Gastrocnemius medialis (tissue), 4 donors: ENCODE measurements at regions of chr12 and their contacts with region 1.

Region 1: GRCh38 chr12:1650260-1650977 is 21.4 kb downstream of the WNT5B start:
- DNase-seq: no peak
- ATAC-seq: no peak
- H3K4me3 ChIP-seq: no peak overlapping the region
- H3K27ac ChIP-seq: no peak overlapping the region
- H3K4me1 ChIP-seq: no peaks in the 10 kb centered on the region
- H3K27me3 ChIP-seq: no peaks in the 10 kb centered on the region
- CTCF ChIP-seq: no peak
- POLR2A ChIP-seq: no peak

Region 2: DNA sequence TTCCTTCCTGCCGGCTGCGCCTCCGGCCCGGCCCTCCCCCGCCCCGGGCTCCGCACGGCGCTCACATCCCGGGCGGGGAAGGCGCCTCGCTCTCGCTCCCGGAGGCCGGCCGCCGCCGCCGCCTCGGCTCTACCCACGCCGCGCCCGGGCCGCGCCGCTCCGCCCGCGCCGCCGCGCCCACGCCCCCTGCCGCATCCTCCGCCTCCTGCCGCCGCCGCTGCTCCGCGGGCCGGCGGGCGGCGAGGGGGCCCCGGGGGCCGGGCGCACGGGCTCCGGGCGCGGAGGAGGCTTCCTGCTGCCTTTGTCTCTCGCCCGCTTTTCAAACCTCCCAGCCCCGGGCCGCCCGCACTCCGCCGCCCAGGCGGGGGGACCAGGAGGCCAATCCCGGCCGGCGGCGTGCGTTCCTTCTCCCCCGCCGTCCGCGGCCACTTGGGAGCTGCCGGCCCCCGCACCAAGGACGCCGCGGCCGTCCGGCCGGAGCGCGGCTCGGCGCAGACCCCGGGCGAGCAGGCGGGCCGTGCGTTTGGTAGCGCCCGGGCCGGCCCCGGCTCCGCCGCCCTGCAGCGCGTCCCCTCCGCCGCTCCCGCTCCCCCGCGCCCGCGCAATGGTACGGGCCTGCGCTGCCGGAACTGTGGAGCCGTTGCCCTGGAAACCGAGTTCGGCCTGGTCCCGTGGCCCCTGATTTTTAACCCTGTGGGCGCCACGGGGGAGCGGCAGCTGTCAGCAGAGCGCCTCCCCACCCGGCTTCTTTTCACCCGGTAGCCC is 56.0 kb before region 1 on chr12 and contains the start of gene FBXL14:
- in situ Hi-C with region 1: no loop called
- intact Hi-C with region 1: no loop called
- DNase-seq: peak; percentile 81 to 83
- ATAC-seq: peak; percentile 81 to 83
- H3K4me3 ChIP-seq: peak within 1 kb of the TSS; percentile 78 to 90 (median 86)
- H3K27ac ChIP-seq: peak within 1 kb of the TSS; percentile 83 to 92 (median 91)
- H3K4me1 ChIP-seq: peaks cover 30 to 39% of the 10 kb centered on the region in 2 donors
- H3K27me3 ChIP-seq: no peaks in the 10 kb centered on the region
- CTCF ChIP-seq: peak in 1 of 5 experiments; percentile 18
- POLR2A ChIP-seq: peak; percentile 24 to 55
- total RNA-seq, gene FBXL14: 5.8 to 11.5 (median 7.4) TPM

Region 3: GRCh38 chr12:1787714-1788113 is 137.3 kb after region 1 on chr12:
- in situ Hi-C with region 1: loop called (anchors 5 kb)
- intact Hi-C with region 1: loop called (anchors 1 kb)
- DNase-seq: no peak
- ATAC-seq: no peak
- H3K4me3 ChIP-seq: no peak overlapping the region
- H3K27ac ChIP-seq: peak overlapping the region in 1 of 4 donors; percentile 14
- H3K4me1 ChIP-seq: peaks cover 33 to 56% of the 10 kb centered on the region in 2 donors
- H3K27me3 ChIP-seq: no peaks in the 10 kb centered on the region
- CTCF ChIP-seq: no peak
- POLR2A ChIP-seq: no peak